ENCODE measurements at regions of chr3 and their contacts with region 1.

Region 1: DNA sequence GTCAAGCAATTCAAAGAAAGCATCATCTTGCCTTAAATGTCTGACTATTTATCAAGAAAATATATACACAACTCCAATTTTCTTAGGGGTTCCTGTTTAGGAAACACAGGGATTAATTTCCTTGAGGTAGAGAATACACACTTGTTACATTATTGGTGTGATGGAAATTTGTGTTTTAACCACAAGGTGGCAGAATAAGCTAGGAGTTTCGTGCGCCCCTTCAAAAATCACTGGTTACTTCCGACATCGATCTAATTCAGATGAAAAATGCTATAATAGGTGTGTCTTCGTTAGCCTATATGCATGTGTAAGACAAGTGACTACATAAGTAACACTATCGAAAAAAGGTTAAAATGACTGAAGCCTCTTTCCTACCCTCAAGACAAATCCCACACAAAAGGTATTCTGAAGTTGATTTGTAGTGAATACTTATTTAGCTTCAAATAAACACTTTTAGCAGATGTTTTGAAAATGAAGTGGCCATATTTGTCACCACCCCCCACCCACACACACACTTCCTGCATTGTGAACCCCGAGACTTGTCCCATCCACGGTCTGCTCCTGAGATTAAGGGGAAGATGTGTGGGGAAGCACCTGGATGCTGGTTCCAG is 246.5 kb downstream of the ROBO1 start:
- DNase-seq: no peak

Region 2: DNA sequence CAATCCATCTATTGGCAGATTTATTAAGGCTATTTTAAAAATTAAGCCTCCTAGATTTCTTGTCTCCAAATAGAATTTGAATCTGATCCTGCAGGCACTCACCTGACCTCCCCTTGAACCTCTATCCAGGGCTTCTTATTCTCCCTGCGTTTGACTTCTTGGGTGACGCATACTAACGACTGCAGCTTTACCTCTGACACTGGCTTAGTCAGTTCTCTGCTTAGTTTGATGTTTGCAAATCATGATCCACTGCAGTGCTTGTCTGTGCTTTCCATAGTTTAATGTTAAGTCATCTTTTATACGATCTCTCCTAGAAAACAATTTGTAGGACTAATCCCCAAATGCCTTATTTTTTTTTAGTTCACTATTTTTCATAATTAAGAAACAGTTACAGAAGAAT is 13.4 kb after region 1 on chr3:
- intact Hi-C with region 1: no loop called
- DNase-seq: no peak

Region 3: GRCh38 chr3:79846148-79846933 is 325.0 kb after region 1 on chr3:
- intact Hi-C with region 1: loop called (anchors 5 kb)
- DNase-seq: no peak